CD4-positive, alpha-beta memory T cell (primary cell): ENCODE measurements at regions of chr12 and their contacts with region 1.

Region 1: DNA sequence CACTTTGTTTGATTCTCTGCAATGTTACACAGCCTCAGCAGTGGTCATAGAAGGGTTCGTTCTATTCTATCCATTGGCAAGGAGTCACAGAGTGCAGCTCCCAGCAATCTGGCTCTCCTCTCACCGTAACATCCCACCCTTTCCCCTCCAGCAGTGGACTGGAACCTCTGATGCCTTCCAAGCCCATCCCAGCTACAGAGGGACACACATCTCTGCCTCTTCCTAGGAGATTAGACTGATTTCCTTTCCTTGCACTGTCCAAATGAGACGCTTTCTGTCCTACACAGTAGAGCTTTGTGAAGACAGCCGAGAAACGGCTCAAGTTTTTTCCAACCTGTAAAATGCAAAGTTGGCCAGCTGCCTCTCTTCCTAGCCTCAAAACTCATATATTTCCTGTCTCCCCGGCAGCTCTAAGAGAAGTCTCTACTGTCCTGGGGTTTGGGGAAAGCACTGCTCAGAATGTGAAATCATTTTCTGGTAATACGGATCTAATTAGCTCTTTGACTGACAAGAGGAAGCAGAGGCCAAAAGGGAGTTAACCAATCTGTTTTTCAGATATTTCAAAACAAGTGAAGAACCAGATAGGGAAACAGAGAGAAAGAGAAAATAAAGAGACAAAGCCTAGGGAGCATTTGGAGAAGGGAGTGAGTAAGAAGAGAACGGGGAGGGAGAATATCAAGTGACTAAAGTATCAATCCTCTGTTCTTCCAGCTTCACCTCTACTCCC is 516 bp downstream of the NINJ2 start:
- DNase-seq: no peak
- H3K4me3 ChIP-seq: peak overlapping the region in 1 of 2 donors; percentile 16
- H3K4me3 Mint-ChIP-seq: peak overlapping the region; percentile 80 to 93 (median 86)
- H3K27ac ChIP-seq: peak overlapping the region; percentile 49
- H3K27ac Mint-ChIP-seq: peak overlapping the region; percentile 14 to 95 (median 90)
- H3K4me1 ChIP-seq: peaks cover 50% of the 10 kb centered on the region
- H3K4me1 Mint-ChIP-seq: peaks cover 29 to 58% (median 48%) of the 10 kb centered on the region in 4 donors
- H3K27me3 ChIP-seq: no peaks in the 10 kb centered on the region
- H3K27me3 Mint-ChIP-seq: no peaks in the 10 kb centered on the region

Region 2: DNA sequence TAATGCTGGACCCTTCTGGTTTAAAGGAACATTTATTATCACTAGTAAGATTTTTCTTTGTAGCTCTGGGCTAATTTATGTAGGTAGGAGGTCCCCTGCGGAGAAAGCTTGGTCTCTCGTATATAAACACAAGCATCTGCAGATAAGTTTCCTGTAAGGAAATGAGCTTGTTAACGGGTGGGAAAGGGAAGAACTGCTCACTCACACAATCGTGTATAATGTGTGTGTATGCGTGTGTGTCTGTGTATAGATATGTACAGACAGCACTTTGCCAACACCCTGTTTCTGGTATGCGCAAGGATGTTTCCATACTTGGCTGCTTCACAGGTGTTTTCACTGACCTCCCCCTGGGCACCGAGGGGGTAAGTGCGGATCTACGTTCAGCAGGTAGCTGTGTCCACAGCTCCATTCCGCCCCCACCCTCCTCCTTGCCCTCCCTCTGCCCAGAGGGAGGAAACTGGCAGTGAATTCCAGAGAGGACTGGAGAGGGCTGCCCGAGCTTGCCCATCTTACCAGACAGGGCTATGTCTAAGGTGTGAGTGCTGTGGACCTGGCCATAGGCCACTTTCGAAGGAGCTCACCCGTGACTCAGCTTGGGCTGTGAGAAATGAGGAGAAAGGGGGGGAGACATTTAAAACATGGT is 64.7 kb before region 1 on chr12:
- CTCF ChIA-PET with region 1: no interaction called
- POLR2A ChIA-PET with region 1: no interaction called
- intact Hi-C with region 1: no loop called
- DNase-seq: no peak
- H3K4me3 ChIP-seq: no peak overlapping the region
- H3K4me3 Mint-ChIP-seq: no peak overlapping the region
- H3K27ac ChIP-seq: no peak overlapping the region
- H3K27ac Mint-ChIP-seq: no peak overlapping the region
- H3K4me1 ChIP-seq: no peaks in the 10 kb centered on the region
- H3K4me1 Mint-ChIP-seq: no peaks in the 10 kb centered on the region
- H3K27me3 ChIP-seq: no peaks in the 10 kb centered on the region
- H3K27me3 Mint-ChIP-seq: no peaks in the 10 kb centered on the region

Region 3: GRCh38 chr12:630656-631632 is 31.8 kb before region 1 on chr12:
- CTCF ChIA-PET with region 1: no interaction called
- POLR2A ChIA-PET with region 1: interaction called, 10 read pairs
- intact Hi-C with region 1: no loop called
- DNase-seq: peak in 3 of 5 donors; percentile 66 to 81 (median 68)
- H3K4me3 ChIP-seq: peak overlapping the region in 1 of 2 donors; percentile 68
- H3K4me3 Mint-ChIP-seq: peak overlapping the region in 6 of 8 donors; percentile 92 to 98 (median 93)
- H3K27ac ChIP-seq: peak overlapping the region; percentile 76
- H3K27ac Mint-ChIP-seq: peak overlapping the region in 5 of 7 donors; percentile 86 to 99 (median 95)
- H3K4me1 ChIP-seq: peaks cover 15% of the 10 kb centered on the region
- H3K4me1 Mint-ChIP-seq: peaks cover 4 to 28% (median 18%) of the 10 kb centered on the region in 4 donors
- H3K27me3 ChIP-seq: no peaks in the 10 kb centered on the region
- H3K27me3 Mint-ChIP-seq: no peaks in the 10 kb centered on the region

Region 4: GRCh38 chr12:828726-829395 is 166.1 kb after region 1 on chr12:
- CTCF ChIA-PET with region 1: no interaction called
- POLR2A ChIA-PET with region 1: no interaction called
- intact Hi-C with region 1: no loop called
- DNase-seq: no peak
- H3K4me3 ChIP-seq: no peak overlapping the region
- H3K4me3 Mint-ChIP-seq: no peak overlapping the region
- H3K27ac ChIP-seq: no peak overlapping the region
- H3K27ac Mint-ChIP-seq: peak overlapping the region in 5 of 7 donors; percentile 9 to 53 (median 16)
- H3K4me1 ChIP-seq: peaks cover 24% of the 10 kb centered on the region
- H3K4me1 Mint-ChIP-seq: peaks cover 17 to 44% (median 34%) of the 10 kb centered on the region in 4 donors
- H3K27me3 ChIP-seq: no peaks in the 10 kb centered on the region
- H3K27me3 Mint-ChIP-seq: no peaks in the 10 kb centered on the region